OCI-LY7 (cell line): ENCODE measurements at regions of chr13 and their contacts with region 1.

Region 1: GRCh38 chr13:23871616-23872220 is 17.5 kb downstream of the MIPEP start:
- DNase-seq: peak; percentile 34
- H3K4me3 ChIP-seq: no peak overlapping the region
- H3K27ac ChIP-seq: no peak overlapping the region
- H3K4me1 ChIP-seq: no peaks in the 10 kb centered on the region
- CTCF ChIP-seq: peak; percentile 92

Region 2: DNA sequence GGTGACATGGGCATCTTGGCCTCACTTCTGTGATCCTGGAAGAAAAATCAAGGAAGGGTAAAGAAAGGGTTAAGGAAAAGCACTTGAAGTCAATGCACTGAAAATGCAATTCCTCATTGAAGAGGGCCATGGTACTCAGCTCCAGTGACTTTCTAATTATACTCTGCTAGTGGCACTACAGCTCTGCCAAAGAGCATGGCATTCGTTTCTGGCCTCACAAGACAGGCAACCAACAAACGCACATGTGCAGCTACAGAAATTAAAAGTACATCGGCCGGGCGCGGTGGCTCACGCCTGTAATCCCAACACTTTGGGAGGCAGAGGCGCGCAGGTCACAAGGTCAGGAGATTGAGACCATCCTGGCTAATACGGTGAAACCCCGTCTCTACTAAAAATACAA is 460.0 kb before region 1 on chr13:
- CTCF ChIA-PET with region 1: no interaction called
- POLR2A ChIA-PET with region 1: no interaction called
- intact Hi-C with region 1: loop called (anchors 2 kb)
- DNase-seq: no peak
- H3K4me3 ChIP-seq: no peak overlapping the region
- H3K27ac ChIP-seq: no peak overlapping the region
- H3K4me1 ChIP-seq: no peaks in the 10 kb centered on the region
- CTCF ChIP-seq: no peak

Region 3: DNA sequence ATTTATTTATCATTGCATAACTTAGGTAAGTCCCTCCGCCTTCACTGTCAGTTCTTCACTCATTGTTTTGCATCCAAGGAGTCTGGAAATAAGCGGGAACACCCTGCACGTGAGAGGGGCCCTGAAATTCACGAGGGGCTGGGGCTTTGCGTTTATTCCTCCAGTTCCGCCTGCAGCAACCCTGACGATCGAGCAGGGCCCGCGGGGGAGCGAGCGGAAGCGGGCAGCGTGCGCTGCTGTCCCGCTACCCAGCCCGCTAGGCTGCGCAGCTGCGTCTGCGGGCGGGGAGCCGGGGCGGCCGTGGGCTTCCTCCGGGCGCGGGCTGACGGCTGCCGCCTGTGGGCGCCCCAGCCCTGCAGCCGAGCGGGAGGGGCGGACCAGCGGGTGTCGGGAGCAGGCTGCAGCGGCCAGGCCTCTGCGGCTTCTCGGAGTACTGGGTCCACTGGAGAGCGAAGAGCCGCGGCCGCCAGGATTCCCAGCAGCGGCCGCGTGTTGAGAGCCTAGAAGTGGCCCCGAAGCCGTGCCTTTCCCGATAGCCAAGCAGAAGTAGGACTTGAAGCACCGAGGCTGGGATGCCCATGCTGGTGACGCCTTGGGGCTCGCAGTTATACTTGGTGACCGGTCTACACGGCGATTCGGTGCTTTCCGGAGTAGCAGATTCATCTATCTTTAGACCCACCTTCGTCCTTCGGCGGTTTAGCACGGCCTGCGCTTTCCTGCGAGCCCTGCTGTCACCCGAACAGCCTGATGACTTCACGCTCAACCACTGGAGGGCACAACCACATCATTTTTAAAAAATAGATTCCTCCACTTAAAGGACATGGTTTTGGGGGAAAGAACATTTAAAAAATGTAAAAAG is 405.3 kb before region 1 on chr13:
- CTCF ChIA-PET with region 1: no interaction called
- POLR2A ChIA-PET with region 1: no interaction called
- intact Hi-C with region 1: loop called (anchors 10 kb)
- DNase-seq: peak; percentile 13
- H3K4me3 ChIP-seq: no peak overlapping the region
- H3K27ac ChIP-seq: no peak overlapping the region
- H3K4me1 ChIP-seq: no peaks in the 10 kb centered on the region
- CTCF ChIP-seq: peak; percentile 54

Region 4: GRCh38 chr13:23510979-23511735 is 360.6 kb before region 1 on chr13:
- CTCF ChIA-PET with region 1: no interaction called
- POLR2A ChIA-PET with region 1: no interaction called
- intact Hi-C with region 1: loop called (anchors 10 kb)
- DNase-seq: peak; percentile 16
- H3K4me3 ChIP-seq: no peak overlapping the region
- H3K27ac ChIP-seq: no peak overlapping the region
- H3K4me1 ChIP-seq: no peaks in the 10 kb centered on the region
- CTCF ChIP-seq: peak; percentile 53

Region 5: DNA sequence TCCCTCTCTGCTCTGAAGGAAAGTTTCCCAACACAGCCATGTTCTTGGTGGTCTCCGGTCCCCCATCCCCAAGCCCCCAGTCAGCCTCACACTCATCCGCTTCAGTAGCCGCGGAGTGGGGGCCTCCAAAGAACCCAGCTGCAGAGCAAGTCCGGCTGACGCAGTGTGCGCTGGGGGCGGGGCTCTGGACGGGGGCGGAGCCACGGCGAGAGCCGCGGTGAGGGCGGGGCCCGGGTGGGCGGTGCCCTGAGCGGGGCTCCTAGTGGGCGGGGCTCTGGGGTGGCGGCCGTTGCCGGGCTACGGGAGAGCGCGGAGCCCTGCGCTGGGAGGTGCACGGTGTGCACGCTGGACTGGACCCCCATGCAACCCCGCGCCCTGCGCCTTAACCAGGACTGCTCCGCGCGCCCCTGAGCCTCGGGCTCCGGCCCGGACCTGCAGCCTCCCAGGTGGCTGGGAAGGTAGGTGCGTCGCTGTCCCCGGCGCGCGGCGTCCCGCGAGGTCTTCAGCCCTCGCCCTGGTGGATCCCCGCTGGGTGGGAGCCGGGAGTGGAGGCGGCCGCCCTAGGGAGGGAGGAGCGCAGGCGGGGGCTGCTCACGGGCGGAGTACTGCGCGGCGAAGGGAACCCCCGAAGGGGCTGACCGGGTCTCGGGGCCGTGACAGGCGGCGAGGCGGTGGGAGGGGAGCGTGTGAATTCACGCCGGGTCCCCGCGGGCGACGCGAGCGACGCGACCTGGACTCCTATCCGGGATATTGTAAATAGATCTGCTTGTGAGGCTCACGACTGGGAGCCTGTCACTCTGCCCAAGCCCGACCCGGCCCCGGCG is 292.4 kb before region 1 on chr13:
- CTCF ChIA-PET with region 1: no interaction called
- POLR2A ChIA-PET with region 1: no interaction called
- intact Hi-C with region 1: loop called (anchors 5 kb)
- DNase-seq: peak; percentile 75
- H3K4me3 ChIP-seq: peak overlapping the region; percentile 64
- H3K27ac ChIP-seq: no peak overlapping the region
- H3K4me1 ChIP-seq: no peaks in the 10 kb centered on the region
- CTCF ChIP-seq: no peak

Region 6: GRCh38 chr13:23715762-23716235 is 155.9 kb before region 1 on chr13:
- CTCF ChIA-PET with region 1: no interaction called
- POLR2A ChIA-PET with region 1: no interaction called
- intact Hi-C with region 1: loop called (anchors 1 kb)
- DNase-seq: peak; percentile 26
- H3K4me3 ChIP-seq: no peak overlapping the region
- H3K27ac ChIP-seq: no peak overlapping the region
- H3K4me1 ChIP-seq: no peaks in the 10 kb centered on the region
- CTCF ChIP-seq: peak; percentile 64